ENCODE measurements at regions of chr9 and their contacts with region 1.

Region 1: GRCh38 chr9:38700695-38701094 is 19.2 kb downstream of the FAM240B start:
- DNase-seq: no peak
- H3K4me3 ChIP-seq: no peak overlapping the region
- CTCF ChIP-seq: no peak
- POLR2A ChIP-seq: no peak

Region 2: GRCh38 chr9:38761334-38761733 is 60.6 kb after region 1 on chr9:
- intact Hi-C with region 1: loop called (anchors 5 kb)
- DNase-seq: no peak
- H3K4me3 ChIP-seq: no peak overlapping the region
- CTCF ChIP-seq: no peak
- POLR2A ChIP-seq: no peak

Measured in lower leg skin (tissue), 4 donors.